BJ (cell line): ENCODE measurements at regions of chr19 and their contacts with region 1.

Region 1: GRCh38 chr19:46392243-46392801 is 21.0 kb downstream of the CCDC8 start:
- DNase-seq: peak; percentile 18
- H3K4me3 ChIP-seq: no peak overlapping the region
- H3K27me3 ChIP-seq: no peaks in the 10 kb centered on the region
- CTCF ChIP-seq: no peak

Region 2: GRCh38 chr19:46288896-46289588 is 103.3 kb before region 1 on chr19:
- CTCF ChIA-PET with region 1: interaction called, 76 read pairs
- POLR2A ChIA-PET with region 1: no interaction called
- DNase-seq: peak; percentile 52
- H3K4me3 ChIP-seq: no peak overlapping the region
- H3K27me3 ChIP-seq: no peaks in the 10 kb centered on the region
- CTCF ChIP-seq: no peak

Region 3: GRCh38 chr19:46372901-46373420 is 19.4 kb before region 1 on chr19:
- CTCF ChIA-PET with region 1: interaction called, 15 read pairs
- POLR2A ChIA-PET with region 1: no interaction called
- DNase-seq: no peak
- H3K4me3 ChIP-seq: no peak overlapping the region
- H3K27me3 ChIP-seq: no peaks in the 10 kb centered on the region
- CTCF ChIP-seq: peak; percentile 38

Region 4: DNA sequence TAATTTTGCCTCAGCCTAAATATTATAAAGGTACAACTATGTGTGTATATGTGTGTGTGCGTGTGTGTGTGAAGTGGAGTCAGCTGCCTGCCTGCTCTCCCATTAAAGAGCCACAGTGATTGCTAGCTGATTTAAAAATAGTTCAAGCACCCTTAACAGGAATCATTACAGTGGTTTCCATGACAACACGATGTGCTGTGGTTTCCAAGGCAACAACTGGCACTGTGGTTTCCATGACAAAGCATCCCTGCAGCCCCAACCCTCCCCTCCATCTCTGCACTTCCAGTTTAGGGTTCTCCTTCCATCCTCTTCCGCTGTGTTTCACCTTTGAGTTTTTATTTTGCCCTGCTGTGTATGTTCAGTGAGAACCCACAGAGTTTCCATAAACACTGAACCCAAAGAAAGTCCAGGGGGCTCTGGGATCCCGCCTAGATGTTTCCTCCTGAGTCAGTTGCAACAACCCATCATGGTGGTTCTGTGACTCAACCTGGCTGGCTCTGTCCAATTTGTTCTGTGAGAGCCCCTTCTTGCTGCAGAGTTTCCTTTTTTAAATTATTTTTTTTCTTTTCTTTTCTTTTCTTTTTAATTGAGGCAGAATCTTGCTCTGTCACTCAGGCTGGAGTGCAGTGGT is 86.1 kb after region 1 on chr19:
- CTCF ChIA-PET with region 1: interaction called, 78 read pairs
- POLR2A ChIA-PET with region 1: interaction called, 5 read pairs
- DNase-seq: no peak
- H3K4me3 ChIP-seq: no peak overlapping the region
- H3K27me3 ChIP-seq: no peaks in the 10 kb centered on the region
- CTCF ChIP-seq: no peak

Region 5: DNA sequence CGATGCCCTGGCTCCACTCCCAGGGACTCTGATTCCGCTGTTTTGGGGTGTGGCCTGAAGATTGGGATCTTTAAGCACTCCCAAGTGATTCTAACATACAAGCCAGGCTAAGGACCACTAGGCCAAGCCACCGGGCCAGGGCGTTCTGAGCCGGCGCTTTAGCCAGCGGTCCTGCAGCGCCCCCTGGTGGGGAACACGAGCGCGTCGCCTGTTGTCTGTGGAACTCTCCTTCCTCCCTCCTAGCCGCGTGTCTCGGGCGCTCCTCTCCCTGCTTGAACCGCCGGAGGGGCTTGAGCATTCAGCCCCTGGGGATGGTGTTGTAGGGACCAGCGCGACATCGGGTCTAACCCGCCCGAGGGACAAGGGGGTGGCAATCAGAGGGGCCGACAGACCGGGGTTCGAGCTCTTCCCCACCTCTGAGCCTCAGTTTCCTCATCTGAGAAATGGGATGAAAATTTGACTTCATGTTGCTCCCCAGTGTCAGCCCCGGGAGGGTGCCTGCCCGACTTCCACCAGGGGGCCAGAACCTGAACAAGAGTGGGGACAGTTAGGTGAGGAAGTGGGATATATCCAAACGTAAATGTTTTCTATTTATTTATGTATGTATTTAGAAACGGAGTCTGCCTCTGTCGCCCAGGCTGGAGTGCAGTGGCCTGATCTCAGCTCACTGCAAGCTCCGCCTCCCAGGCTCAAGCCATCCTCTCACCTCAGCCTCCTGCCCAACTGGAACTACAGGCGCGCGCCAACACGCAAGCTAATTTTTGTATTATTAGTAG is 121.3 kb after region 1 on chr19:
- CTCF ChIA-PET with region 1: interaction called, 79 read pairs
- POLR2A ChIA-PET with region 1: no interaction called
- DNase-seq: no peak
- H3K4me3 ChIP-seq: no peak overlapping the region
- H3K27me3 ChIP-seq: peaks cover 3% of the 10 kb centered on the region; the same call in 1 of the 2 replicates
- CTCF ChIP-seq: peak; percentile 95